ENCODE measurements at regions of chr1 and their contacts with region 1.

Region 1: DNA sequence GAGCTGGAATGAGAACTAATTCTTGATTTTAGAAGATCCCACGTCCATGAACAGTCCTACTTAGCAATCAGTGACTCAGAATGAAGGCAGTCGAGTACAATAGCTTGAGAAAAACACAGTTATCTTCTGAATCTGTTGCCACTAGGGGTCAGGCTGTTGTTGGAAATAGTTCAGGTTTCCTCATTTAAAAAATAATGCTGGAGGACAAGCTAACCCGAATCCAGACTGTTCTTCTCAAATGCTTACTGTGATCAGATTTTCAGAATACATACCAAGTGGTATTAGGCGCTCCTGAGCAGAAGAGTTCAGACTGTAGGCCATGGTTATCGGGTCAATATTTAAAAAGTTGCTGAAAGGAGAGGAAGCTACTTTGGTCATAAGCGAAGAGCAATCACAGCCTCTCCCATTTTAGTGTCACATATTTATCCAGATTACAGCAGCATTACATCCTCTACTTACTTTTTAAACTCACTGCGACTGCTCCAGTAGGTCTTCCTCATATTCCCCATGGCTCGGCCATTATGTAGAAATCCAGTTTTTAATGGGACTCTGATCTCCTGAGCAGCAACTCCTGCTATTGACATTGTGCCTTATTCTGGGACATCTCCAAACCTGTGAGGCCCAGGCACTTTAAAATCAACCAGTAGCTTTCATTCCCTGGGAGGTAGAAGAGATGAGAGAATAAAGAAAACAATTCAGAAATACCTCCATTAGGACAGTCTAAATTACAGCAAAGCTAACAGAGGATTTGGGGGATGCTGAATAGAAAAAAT is 10.9 kb downstream of the ERRFI1 start:
- DNase-seq: peak; percentile 85
- H3K4me3 Mint-ChIP-seq: no peak overlapping the region
- H3K27ac Mint-ChIP-seq: no peak overlapping the region
- H3K4me1 Mint-ChIP-seq: peaks cover 3% of the 10 kb centered on the region
- H3K27me3 Mint-ChIP-seq: peaks cover 32% of the 10 kb centered on the region

Region 2: DNA sequence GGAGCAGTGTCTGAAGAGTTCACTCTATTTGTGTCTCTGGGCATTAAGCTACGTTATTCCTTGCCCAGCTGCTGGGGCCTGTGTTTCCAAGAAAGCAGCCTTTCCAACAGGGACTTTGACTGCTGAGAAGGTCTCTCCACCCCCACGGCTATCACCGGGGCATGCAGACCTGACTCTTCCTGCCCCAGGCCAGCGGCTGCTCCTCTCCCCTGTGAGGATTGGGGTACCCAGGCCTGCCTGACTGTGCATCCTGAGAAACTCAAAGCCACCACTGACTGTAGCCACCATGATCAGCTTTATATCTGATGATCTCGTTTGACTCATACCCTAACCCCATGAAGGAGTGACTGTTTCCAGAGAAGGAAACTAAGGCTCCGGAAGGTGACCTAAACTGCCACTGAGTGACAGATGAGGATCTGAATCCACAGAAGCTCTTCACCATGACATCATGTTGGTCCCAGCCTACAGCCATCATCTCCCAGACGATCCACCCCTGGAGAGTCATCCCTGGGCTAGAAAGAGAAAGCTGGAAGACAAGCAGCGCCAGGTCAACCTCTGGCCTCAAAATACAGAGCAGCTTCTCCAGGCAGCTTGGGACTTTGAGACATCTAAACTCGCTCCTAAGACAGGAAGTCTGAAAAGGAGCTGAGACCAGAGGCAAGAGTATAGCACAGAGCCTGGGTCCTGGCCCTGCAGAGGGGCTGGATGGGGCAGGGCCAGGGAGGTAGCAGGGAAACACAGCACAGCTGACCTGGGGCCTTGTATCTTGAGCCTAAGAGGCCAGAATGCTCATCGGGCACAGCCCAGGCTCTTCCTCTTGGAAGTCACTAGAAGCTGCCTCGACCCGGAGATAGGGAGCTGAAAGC is 488.1 kb before region 1 on chr1:
- intact Hi-C with region 1: no loop called
- DNase-seq: no peak
- H3K4me3 Mint-ChIP-seq: no peak overlapping the region
- H3K27ac Mint-ChIP-seq: no peak overlapping the region
- H3K4me1 Mint-ChIP-seq: no peaks in the 10 kb centered on the region
- H3K27me3 Mint-ChIP-seq: no peaks in the 10 kb centered on the region

Region 3: DNA sequence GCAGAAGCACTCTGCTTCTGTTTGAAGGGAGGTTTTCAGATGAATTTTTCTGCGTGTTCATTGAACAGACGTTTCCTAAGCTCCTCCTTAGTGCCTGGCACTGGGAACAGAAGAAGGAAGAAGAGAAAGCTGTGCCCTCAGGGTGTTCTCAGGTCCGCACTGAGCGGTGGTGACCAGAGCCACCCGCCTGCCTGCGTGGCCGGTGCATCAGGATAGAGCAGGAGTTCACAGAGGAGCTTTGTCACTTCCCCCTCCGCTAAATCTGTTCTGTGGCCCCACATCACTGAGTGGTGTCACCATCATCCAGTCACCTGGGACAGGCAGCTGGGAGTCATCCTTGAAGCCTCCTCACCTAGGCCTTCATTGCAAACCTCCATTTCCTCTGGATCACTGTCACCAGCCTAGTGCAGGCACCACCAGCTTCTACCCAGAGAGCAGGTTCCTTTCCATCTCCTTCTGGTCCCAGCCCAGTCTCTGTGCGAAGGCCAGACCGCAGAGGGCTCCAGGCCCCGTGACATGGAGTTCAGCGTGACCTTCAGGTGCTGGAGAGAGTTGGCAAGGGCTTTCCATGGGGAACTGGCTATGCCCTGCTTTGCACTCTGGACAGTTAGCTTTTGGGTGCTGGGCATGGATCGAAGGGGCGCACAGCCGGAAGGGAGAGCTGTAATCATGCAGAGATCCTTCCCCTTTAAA is 32.0 kb before region 1 on chr1:
- intact Hi-C with region 1: loop called (anchors 2 kb)
- DNase-seq: no peak
- H3K4me3 Mint-ChIP-seq: no peak overlapping the region
- H3K27ac Mint-ChIP-seq: no peak overlapping the region
- H3K4me1 Mint-ChIP-seq: peaks cover 9% of the 10 kb centered on the region
- H3K27me3 Mint-ChIP-seq: no peaks in the 10 kb centered on the region

Region 4: DNA sequence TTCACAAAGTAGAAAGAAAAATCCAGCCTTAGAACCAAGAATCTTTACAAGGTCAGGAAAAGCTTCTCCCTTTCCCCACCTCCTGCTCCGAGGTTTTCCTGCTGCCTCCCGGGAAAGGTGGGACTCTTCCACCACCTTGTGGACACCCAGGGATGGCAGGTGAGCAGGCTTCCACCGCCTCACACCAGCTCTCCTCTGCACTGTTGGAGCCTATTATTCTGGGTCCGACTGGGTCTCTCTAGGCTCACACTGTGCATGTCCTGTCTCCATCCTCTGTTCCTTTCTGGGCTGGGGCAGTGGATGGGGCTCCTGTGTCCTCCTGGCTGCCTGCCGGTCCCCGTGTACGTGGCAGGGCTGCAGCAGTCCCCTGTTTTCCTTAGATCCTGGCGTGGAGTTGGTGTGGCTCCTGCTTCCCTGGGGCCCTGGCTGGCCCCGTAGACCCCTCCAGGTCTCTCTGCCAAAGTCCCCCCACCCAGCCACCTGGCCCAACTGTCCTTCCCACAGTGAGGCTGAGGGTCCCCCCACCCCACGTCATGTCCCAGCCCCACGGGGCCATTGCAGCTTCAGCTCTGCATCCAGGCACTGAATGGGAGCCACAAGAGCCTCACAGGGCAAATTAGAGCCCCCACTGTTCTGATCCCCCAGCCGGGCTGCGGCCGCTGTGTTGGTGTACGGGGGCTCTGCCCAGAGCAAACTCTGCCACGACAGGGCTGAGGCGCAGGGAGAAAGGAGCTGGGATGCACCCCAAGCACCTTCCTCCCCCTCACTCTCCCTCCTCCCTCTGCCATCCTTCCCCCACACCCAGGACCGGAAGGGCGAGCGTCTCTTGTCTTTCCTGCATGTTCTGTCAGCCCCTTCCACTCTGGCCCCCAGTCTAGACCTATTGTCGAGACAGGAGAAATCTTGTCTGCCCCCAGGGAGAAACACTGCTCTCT is 299.4 kb after region 1 on chr1:
- intact Hi-C with region 1: loop called (anchors 1 kb)
- DNase-seq: peak; percentile 83
- H3K4me3 Mint-ChIP-seq: peak overlapping the region; percentile 28
- H3K27ac Mint-ChIP-seq: no peak overlapping the region
- H3K4me1 Mint-ChIP-seq: peaks cover 14% of the 10 kb centered on the region
- H3K27me3 Mint-ChIP-seq: peaks cover 41% of the 10 kb centered on the region

Region 5: GRCh38 chr1:8348777-8349491 is 333.7 kb after region 1 on chr1:
- intact Hi-C with region 1: loop called (anchors 1 kb)
- DNase-seq: peak; percentile 90
- H3K4me3 Mint-ChIP-seq: no peak overlapping the region
- H3K27ac Mint-ChIP-seq: no peak overlapping the region
- H3K4me1 Mint-ChIP-seq: no peaks in the 10 kb centered on the region
- H3K27me3 Mint-ChIP-seq: no peaks in the 10 kb centered on the region

Region 6: DNA sequence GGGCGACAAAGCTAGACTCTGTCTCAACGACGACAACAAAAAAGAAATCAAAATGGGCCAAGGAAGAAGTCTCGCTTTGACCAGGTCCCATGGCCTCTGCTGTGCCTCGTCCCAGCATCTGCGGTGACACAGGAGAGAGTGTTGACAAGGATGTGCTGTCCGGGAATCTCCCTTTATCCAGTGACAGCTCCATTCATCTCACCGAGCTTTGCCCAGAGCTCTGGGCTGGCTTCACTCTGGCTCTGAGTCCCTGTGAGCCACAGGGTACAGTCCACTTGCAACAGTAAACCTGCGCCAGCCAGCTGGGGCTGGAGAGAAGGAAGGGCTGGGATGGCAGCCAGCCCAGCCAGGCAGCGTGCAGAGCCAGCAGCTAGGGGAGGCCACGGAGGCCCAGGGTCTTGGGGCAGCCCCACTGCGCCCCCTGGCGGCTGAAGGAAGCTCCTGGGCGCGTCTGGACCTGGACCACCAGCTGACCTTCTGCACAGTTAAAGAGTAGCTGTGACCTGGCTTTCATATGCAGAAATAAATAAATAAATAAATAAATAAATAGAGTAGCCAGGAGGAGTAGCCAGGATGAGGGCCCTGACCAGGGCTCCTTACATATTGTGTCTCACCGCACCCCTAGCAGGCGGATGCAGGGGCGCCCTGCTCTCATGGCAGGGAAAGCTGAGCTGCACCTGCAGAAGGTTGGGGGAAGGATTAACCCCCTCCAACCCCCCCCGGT is 833.6 kb after region 1 on chr1:
- intact Hi-C with region 1: loop called (anchors 5 kb)
- DNase-seq: peak; percentile 92
- H3K4me3 Mint-ChIP-seq: no peak overlapping the region
- H3K27ac Mint-ChIP-seq: no peak overlapping the region
- H3K4me1 Mint-ChIP-seq: peaks cover 3% of the 10 kb centered on the region
- H3K27me3 Mint-ChIP-seq: no peaks in the 10 kb centered on the region